ENCODE measurements at regions of chr2 and their contacts with region 1.

Region 1: DNA sequence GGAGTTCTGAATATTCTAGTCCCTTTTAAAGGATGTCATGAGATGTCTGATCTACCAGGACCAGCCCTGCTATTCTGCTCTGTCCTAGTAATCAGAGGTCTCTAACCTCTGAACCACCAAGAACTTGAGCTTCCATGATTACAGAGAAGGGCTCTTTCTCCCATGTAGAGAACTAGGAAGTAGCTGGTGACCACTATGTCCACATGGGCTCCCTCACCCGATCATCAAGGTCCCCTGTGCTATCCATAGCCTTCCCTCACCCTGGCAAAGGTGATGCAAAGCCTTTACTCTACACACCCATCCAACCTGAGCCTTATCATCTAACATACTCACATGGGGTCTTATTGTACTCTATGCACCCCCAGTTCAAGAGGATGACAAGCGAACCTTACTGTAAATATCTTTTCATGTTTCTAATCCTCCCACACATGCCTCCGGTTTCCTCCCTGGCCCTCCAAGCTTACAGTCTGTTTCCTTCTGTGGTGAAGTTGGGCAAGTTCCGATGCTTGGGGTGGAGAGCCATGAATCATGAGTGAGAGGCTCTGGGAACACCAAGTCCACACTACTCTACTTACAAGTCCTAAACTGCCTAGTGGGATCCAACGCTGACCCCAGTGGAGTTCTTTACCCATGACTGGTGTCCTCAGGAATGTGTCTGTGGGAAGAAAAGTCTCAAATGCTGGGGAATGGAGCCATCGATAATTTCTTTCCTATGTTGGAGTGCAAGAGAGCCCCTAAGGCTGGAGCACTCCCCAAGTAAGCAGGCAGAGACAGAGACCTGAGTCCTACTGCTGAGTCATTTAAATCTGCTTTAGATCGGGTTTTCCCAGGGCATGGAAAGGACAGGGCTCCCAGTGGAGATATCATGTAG is 73.3 kb upstream of the KLF7 start:
- DNase-seq: no peak
- H3K4me3 Mint-ChIP-seq: peak overlapping the region; percentile 64
- H3K27ac Mint-ChIP-seq: peak overlapping the region; percentile 84
- H3K4me1 Mint-ChIP-seq: peaks cover 29% of the 10 kb centered on the region
- H3K27me3 Mint-ChIP-seq: no peaks in the 10 kb centered on the region

Region 2: DNA sequence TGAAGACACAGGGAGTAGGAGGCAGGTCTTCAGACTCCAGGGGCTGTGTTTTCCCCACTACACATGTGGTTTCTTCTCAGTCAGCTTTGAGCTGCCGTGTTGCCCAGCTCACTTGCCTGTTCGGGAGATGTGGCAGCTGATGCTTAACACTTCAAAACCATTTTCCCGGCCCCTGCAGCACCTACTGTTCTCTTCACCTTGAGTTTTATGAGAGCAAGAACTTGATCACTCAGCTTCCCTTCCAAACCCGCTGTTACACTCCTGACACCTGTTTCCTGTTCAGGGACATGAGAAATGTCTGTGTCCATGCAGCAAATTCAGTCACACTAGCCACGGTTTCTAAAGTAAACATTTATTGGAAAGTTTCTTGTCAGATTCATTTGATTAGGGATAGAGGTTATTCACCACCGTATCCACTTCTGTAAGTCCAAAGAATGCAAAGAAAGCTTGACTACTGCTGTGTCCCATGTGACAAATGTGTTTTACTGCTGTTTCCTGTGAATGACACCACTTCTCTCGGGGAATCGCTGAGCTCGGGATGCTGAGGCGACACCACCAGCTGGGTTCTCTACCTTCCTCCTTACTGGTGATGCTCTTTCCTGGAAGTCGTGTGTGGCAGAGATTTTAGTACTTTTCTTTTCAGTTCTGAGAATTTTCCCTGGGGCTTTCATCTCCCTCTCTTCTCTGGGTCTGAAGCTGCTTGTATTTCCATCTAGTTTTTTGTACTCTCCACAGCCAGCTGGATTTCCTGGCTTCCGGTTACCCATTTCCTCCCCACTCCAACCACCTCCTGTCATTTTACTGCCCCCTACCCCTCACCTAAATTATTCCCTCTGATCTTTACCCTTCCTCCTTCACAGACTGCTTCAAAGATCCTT is 165.0 kb before region 1 on chr2:
- intact Hi-C with region 1: loop called (anchors 5 kb)
- DNase-seq: peak; percentile 32
- H3K4me3 Mint-ChIP-seq: peak overlapping the region; percentile 51
- H3K27ac Mint-ChIP-seq: peak overlapping the region; percentile 78
- H3K4me1 Mint-ChIP-seq: peaks cover 30% of the 10 kb centered on the region
- H3K27me3 Mint-ChIP-seq: no peaks in the 10 kb centered on the region

Region 3: DNA sequence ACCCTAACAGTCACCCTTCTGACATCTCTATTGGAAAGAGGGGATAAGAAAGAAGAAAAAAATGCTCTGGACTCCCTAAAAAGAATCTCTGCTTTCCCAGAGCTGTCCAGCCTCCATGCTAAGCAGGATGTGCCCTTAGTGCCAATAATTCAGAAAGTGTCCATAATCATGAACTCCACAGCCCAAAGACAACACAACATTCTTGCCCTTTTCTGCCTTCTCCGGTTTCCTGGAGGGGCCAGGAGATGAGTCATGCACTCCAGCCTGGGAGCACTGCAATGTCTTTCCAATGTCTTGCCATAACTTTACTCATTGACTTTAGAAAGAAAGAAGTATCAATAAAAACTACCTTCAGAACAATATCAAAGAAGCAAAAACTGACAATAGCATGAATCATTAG is 117.3 kb before region 1 on chr2:
- intact Hi-C with region 1: loop called (anchors 2 kb)
- DNase-seq: no peak
- H3K4me3 Mint-ChIP-seq: no peak overlapping the region
- H3K27ac Mint-ChIP-seq: no peak overlapping the region
- H3K4me1 Mint-ChIP-seq: peaks cover 46% of the 10 kb centered on the region
- H3K27me3 Mint-ChIP-seq: no peaks in the 10 kb centered on the region

Region 4: GRCh38 chr2:207219081-207219630 is 19.9 kb before region 1 on chr2:
- intact Hi-C with region 1: no loop called
- DNase-seq: no peak
- H3K4me3 Mint-ChIP-seq: no peak overlapping the region
- H3K27ac Mint-ChIP-seq: no peak overlapping the region
- H3K4me1 Mint-ChIP-seq: peaks cover 17% of the 10 kb centered on the region
- H3K27me3 Mint-ChIP-seq: no peaks in the 10 kb centered on the region

Region 5: DNA sequence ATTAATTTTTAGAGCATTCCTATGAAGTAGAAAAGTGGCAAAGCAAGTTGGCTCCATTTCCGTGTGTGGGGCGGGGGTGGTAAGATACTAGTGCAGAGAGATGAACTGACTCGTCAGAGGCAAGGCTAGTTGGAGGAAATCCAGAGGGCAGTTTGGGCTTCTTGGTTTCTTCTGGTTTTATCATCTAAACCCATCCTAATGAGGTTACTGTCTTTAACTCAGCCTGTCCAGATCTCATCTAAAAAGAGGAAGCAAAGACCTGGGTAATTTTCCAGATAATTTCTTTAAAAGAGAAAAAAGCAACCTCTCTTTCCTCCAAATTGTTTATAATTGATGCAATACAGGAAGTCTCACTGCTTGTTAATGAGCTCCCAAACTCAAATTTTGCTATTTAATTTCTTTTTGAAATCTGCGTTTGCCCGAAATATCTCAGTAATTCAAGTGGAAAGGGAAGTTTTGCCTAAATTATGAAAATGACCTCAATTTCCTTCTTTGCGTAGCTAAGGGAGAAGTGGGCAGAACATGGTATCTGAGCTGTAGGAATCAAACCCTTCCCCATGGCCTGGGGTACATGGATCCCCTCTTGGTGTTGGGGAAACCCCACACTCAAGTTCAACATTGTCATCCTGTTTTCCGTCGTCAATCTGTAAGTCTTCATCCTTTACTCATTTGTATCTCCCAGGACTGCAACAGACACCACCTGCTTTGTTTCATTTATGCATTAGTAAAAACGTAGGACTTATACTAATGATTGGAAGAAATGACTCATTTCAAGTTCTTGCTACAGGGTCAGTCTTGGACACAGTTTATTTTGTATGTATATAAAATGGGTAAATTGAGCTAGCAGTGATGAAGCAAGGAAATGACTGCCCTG is 15.8 kb after region 1 on chr2:
- intact Hi-C with region 1: loop called (anchors 1 kb)
- DNase-seq: no peak
- H3K4me3 Mint-ChIP-seq: no peak overlapping the region
- H3K27ac Mint-ChIP-seq: peak overlapping the region; percentile 81
- H3K4me1 Mint-ChIP-seq: peaks cover 69% of the 10 kb centered on the region
- H3K27me3 Mint-ChIP-seq: no peaks in the 10 kb centered on the region

Region 6: DNA sequence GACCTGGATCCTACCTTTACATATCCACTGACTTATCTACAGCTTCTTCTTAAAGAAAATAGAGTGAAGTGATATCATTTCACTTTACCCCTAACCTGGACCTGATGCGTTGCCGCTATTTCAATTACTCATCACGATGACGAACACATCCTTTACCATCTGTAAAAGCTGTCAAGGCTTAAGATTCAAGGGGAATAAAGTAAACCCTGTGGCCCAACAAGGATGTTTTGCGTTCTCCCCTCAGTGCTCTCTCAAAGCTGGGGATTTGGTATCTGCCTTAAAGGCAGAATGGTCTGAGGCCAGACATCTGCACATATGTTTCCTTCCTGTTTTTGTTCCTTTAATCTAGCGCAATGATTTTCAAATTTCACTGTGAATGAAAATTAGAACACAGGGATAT is 26.8 kb after region 1 on chr2:
- intact Hi-C with region 1: no loop called
- DNase-seq: no peak
- H3K4me3 Mint-ChIP-seq: no peak overlapping the region
- H3K27ac Mint-ChIP-seq: no peak overlapping the region
- H3K4me1 Mint-ChIP-seq: peaks cover 10% of the 10 kb centered on the region
- H3K27me3 Mint-ChIP-seq: no peaks in the 10 kb centered on the region

Region 7: DNA sequence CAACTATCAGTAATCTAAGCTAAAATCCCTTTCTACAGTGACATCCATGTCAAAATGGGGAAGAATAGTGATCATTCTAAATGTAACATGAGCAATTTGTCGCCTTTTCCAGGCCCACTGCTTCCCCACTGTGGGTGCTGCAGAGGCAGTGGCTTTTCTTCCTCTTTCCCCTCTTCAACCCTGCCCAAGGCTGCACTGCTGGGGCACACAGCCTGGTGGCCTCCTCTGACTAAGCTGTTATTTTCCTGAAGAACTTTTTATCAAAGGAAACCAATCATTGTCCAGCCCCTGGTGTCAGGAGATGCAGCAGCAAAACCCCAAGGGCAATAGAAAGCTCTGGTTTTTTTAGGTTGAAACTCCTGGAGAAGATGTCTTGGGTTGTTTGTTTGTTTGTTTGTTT is 44.3 kb after region 1 on chr2:
- intact Hi-C with region 1: loop called (anchors 1 kb)
- DNase-seq: no peak
- H3K4me3 Mint-ChIP-seq: peak overlapping the region; percentile 55
- H3K27ac Mint-ChIP-seq: peak overlapping the region; percentile 82
- H3K4me1 Mint-ChIP-seq: peaks cover 67% of the 10 kb centered on the region
- H3K27me3 Mint-ChIP-seq: no peaks in the 10 kb centered on the region

Region 8: DNA sequence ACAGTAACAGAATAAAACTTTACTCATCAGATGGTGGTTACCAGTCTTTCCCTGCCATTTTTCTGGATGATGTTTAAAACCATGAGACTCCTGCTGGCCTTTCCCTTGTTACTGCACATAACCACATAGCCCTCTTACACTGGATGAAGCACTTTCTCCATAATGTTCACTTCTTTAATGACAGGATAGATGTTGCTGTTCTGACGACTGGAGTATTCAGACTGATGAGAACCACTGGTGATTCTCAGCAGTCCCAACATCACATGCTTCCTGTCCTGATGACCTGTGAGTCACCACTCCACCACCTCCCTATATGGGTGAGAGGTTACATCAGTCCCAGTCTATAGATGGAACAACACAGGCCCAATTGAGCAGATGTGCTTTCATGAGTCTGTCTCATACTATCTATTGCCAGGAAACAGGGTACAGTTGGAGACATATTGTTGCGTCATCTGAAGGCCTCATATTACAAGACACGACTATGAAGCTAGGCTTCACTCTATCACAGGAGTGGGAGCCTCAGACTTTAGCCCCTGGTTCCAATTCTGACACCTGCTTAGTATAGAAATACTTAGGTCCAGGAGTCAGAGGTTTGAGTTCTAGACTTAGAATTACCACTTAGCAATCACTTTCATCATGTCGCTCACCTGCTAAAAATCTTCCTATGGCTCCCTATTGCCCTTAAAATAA is 72.4 kb after region 1 on chr2:
- intact Hi-C with region 1: loop called (anchors 2 kb)
- DNase-seq: no peak
- H3K4me3 Mint-ChIP-seq: no peak overlapping the region
- H3K27ac Mint-ChIP-seq: peak overlapping the region; percentile 68
- H3K4me1 Mint-ChIP-seq: peaks cover 55% of the 10 kb centered on the region
- H3K27me3 Mint-ChIP-seq: no peaks in the 10 kb centered on the region

Region 9: GRCh38 chr2:207503234-207503633 is 264.2 kb after region 1 on chr2:
- intact Hi-C with region 1: loop called (anchors 5 kb)
- DNase-seq: no peak
- H3K4me3 Mint-ChIP-seq: no peak overlapping the region
- H3K27ac Mint-ChIP-seq: no peak overlapping the region
- H3K4me1 Mint-ChIP-seq: peaks cover 67% of the 10 kb centered on the region
- H3K27me3 Mint-ChIP-seq: no peaks in the 10 kb centered on the region

Measured in activated T-helper 2 cell treated with anti-CD3 and anti-CD28 coated beads, Interferon-gamma antibody, Interleukin-2, Interleukin-4, amounts not matched to agents 10 μg/mL and 5 μg/mL and 100 μg/mL, durations not matched to agents 14 hours and 24 hours and 36 hours (primary cell).